CD4-positive, alpha-beta memory T cell (primary cell): ENCODE measurements at regions of chr2 and their contacts with region 1.

Region 1: DNA sequence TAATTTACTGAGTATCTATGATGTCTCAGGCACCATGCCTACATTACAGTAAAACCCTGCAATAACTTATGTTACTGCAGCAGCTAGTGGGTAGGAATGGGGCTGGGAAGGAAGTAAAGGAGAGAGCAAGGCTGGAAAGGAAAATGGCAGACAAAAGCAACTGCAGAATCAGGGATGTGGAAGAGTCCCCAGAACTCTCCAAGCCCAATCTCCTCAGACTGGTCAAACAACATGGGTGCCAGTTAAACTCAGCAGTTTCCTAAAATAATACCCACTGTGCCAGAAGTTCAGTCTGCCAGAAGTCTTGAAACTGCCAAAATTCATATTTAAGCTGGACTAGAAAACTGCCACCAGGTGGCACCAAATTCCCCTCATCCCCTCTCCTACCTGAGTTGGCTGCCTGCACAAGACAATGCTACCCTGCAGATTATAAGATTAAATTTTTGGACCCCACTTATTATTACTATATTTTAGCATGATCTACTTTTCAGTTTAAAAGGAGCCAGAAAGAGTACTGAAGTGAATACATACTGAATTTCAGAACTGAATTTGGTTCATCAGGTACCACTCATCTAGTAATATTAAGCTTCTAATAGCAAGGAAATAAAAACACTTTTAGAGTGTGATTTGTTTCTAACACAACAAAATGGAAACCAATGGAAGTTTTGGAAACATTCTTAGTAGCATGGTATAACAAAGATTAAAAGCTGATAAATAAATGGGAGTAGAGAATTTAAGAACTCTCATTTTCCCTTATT is 86.8 kb upstream of the DNER start:
- DNase-seq: peak; percentile 62 to 71 (median 64)
- H3K4me3 ChIP-seq: no peak overlapping the region
- H3K4me3 Mint-ChIP-seq: no peak overlapping the region
- H3K27ac ChIP-seq: no peak overlapping the region
- H3K27ac Mint-ChIP-seq: peak overlapping the region in 4 of 7 donors; percentile 1 to 41 (median 21)
- H3K4me1 ChIP-seq: no peaks in the 10 kb centered on the region
- H3K4me1 Mint-ChIP-seq: peaks cover 0 to 3% (median 3%) of the 10 kb centered on the region in 4 donors
- H3K27me3 ChIP-seq: no peaks in the 10 kb centered on the region
- H3K27me3 Mint-ChIP-seq: no peaks in the 10 kb centered on the region

Region 2: GRCh38 chr2:229835596-229836283 is 34.6 kb after region 1 on chr2:
- CTCF ChIA-PET with region 1: interaction called, 26 read pairs
- POLR2A ChIA-PET with region 1: no interaction called
- intact Hi-C with region 1: no loop called
- DNase-seq: peak; percentile 51 to 78 (median 68)
- H3K4me3 ChIP-seq: peak overlapping the region in 1 of 2 donors; percentile 25
- H3K4me3 Mint-ChIP-seq: peak overlapping the region; percentile 11 to 82 (median 44)
- H3K27ac ChIP-seq: no peak overlapping the region
- H3K27ac Mint-ChIP-seq: peak overlapping the region; percentile 36 to 96 (median 93)
- H3K4me1 ChIP-seq: peaks cover 71% of the 10 kb centered on the region
- H3K4me1 Mint-ChIP-seq: peaks cover 45 to 76% (median 58%) of the 10 kb centered on the region in 4 donors
- H3K27me3 ChIP-seq: no peaks in the 10 kb centered on the region
- H3K27me3 Mint-ChIP-seq: no peaks in the 10 kb centered on the region

Region 3: DNA sequence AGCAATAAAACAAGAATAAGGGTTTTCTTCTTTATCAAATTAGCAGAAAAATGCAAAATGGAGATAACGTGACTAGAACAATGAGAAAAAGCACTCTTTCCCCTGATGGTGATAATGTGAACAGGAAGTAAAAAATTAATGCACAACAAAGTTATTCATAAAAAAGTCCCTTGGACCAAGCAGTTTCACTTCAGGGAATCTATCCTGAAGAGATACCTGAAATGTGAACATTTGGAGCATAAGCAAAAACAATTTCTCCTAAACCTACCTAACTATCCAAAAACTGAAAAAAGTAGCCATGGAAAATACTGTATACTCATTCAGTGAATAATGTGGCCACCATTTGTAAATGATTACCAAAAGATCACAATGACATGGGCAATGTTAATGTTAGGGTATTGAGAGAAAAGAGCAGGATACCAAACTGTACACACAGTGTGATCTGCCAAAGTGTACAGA is 72.0 kb after region 1 on chr2:
- CTCF ChIA-PET with region 1: interaction called, 4 read pairs
- POLR2A ChIA-PET with region 1: no interaction called
- intact Hi-C with region 1: loop called (anchors 2 kb)
- DNase-seq: no peak
- H3K4me3 ChIP-seq: no peak overlapping the region
- H3K4me3 Mint-ChIP-seq: peak overlapping the region in 2 of 8 donors; percentile 8 to 15
- H3K27ac ChIP-seq: no peak overlapping the region
- H3K27ac Mint-ChIP-seq: peak overlapping the region in 4 of 7 donors; percentile 6 to 26 (median 12)
- H3K4me1 ChIP-seq: peaks cover 36% of the 10 kb centered on the region
- H3K4me1 Mint-ChIP-seq: peaks cover 40 to 70% (median 53%) of the 10 kb centered on the region in 4 donors
- H3K27me3 ChIP-seq: no peaks in the 10 kb centered on the region
- H3K27me3 Mint-ChIP-seq: no peaks in the 10 kb centered on the region

Region 4: GRCh38 chr2:229910832-229911412 is 109.7 kb after region 1 on chr2:
- CTCF ChIA-PET with region 1: interaction called, 142 read pairs
- POLR2A ChIA-PET with region 1: interaction called, 10 read pairs
- intact Hi-C with region 1: loop called (anchors 1 kb)
- DNase-seq: peak in 4 of 5 donors; percentile 22 to 35 (median 30)
- H3K4me3 ChIP-seq: no peak overlapping the region
- H3K4me3 Mint-ChIP-seq: peak overlapping the region in 4 of 8 donors; percentile 17 to 43 (median 30)
- H3K27ac ChIP-seq: peak overlapping the region; percentile 2
- H3K27ac Mint-ChIP-seq: peak overlapping the region in 6 of 7 donors; percentile 28 to 78 (median 48)
- H3K4me1 ChIP-seq: peaks cover 65% of the 10 kb centered on the region
- H3K4me1 Mint-ChIP-seq: peaks cover 32 to 60% (median 43%) of the 10 kb centered on the region in 4 donors
- H3K27me3 ChIP-seq: no peaks in the 10 kb centered on the region
- H3K27me3 Mint-ChIP-seq: no peaks in the 10 kb centered on the region

Region 5: GRCh38 chr2:230007931-230008707 is 206.9 kb after region 1 on chr2:
- CTCF ChIA-PET with region 1: interaction called, 6 read pairs
- POLR2A ChIA-PET with region 1: no interaction called
- intact Hi-C with region 1: loop called (anchors 2 kb)
- DNase-seq: peak; percentile 65 to 73 (median 69)
- H3K4me3 ChIP-seq: no peak overlapping the region
- H3K4me3 Mint-ChIP-seq: peak overlapping the region in 5 of 8 donors; percentile 22 to 57 (median 51)
- H3K27ac ChIP-seq: no peak overlapping the region
- H3K27ac Mint-ChIP-seq: peak overlapping the region in 1 of 7 donors; percentile 9
- H3K4me1 ChIP-seq: no peaks in the 10 kb centered on the region
- H3K4me1 Mint-ChIP-seq: peaks cover 0 to 4% (median 1%) of the 10 kb centered on the region in 4 donors
- H3K27me3 ChIP-seq: no peaks in the 10 kb centered on the region
- H3K27me3 Mint-ChIP-seq: no peaks in the 10 kb centered on the region

Region 6: DNA sequence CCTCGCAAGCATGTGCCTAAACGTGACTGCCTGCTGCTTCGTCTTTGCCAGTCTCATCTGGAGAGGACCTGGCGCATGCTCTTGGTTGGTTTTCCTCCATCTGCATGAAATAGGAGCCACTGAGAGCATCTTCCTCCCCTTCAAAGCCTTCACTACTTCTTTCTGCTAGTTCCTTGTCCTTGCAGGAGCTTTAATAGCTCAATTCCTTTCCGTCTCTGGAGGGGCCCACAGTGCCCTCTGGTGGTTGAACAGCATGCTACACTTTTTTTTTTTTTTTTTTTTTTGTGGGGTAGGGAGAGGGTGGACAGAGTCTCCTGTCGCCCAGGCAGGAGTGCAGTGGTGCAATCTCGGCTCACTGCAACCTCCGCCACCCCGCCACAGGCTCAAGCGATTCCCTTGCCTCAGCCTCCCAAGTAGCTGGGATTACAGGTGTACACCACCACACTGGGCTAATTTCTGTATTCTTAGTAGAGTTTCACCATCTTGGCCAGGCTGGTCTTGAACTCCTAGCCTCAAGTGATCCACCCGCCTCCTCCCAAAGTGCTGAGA is 359.0 kb after region 1 on chr2:
- CTCF ChIA-PET with region 1: interaction called, 13 read pairs
- POLR2A ChIA-PET with region 1: no interaction called
- intact Hi-C with region 1: loop called (anchors 1 kb)
- DNase-seq: peak; percentile 46 to 52 (median 50)
- H3K4me3 ChIP-seq: no peak overlapping the region
- H3K4me3 Mint-ChIP-seq: peak overlapping the region in 2 of 8 donors; percentile 62 to 71
- H3K27ac ChIP-seq: no peak overlapping the region
- H3K27ac Mint-ChIP-seq: peak overlapping the region in 2 of 7 donors; percentile 10 to 42
- H3K4me1 ChIP-seq: peaks cover 7% of the 10 kb centered on the region
- H3K4me1 Mint-ChIP-seq: peaks cover 0 to 6% (median 2%) of the 10 kb centered on the region in 4 donors
- H3K27me3 ChIP-seq: no peaks in the 10 kb centered on the region
- H3K27me3 Mint-ChIP-seq: no peaks in the 10 kb centered on the region